H1 (cell line): ENCODE measurements at regions of chr22 and their contacts with region 1.

Region 1: GRCh38 chr22:43113526-43114251 is 3.1 kb downstream of the BIK start:
- DNase-seq: no peak
- H3K4me3 ChIP-seq: no peak overlapping the region
- H3K27ac ChIP-seq: no peak overlapping the region
- H3K4me1 ChIP-seq: peaks cover 0 to 10% (median 5%) of the 10 kb centered on the region in 4 experiments
- H3K27me3 ChIP-seq: peaks cover 10 to 44% (median 39%) of the 10 kb centered on the region in 4 experiments
- CTCF ChIP-seq: no peak
- EP300 ChIP-seq: no peak
- POLR2A ChIP-seq: no peak
- RAD21 ChIP-seq: no peak

Region 2: GRCh38 chr22:42895541-42895981 is 218.1 kb before region 1 on chr22:
- CTCF ChIA-PET with region 1: no interaction called
- POLR2A ChIA-PET with region 1: no interaction called
- DNase-seq: no peak
- H3K4me3 ChIP-seq: no peak overlapping the region
- H3K27ac ChIP-seq: 0 out of 2 replicates have a peak overlapping the region, but pooled peaks have one; percentile 0
- H3K4me1 ChIP-seq: no peaks in the 10 kb centered on the region; a peak in 1 of 7 replicates
- H3K27me3 ChIP-seq: no peaks in the 10 kb centered on the region
- CTCF ChIP-seq: no peak
- EP300 ChIP-seq: no peak
- POLR2A ChIP-seq: no peak
- RAD21 ChIP-seq: no peak

Region 3: GRCh38 chr22:43088979-43089717 is 24.5 kb before region 1 on chr22 and contains the start of gene TTLL1:
- CTCF ChIA-PET with region 1: no interaction called
- POLR2A ChIA-PET with region 1: no interaction called
- DNase-seq: peak; percentile 75 to 95
- H3K4me3 ChIP-seq: peak within 1 kb of the TSS; percentile 59 to 82 (median 65)
- H3K27ac ChIP-seq: no peak within 1 kb of the TSS; the same call in 1 of the 2 replicates
- H3K4me1 ChIP-seq: no peaks in the 10 kb centered on the region
- H3K27me3 ChIP-seq: no peaks in the 10 kb centered on the region
- CTCF ChIP-seq: no peak
- EP300 ChIP-seq: peak in 1 of 2 experiments; percentile 41; a peak in 1 of 3 replicates
- POLR2A ChIP-seq: peak in 1 of 2 experiments; percentile 62; a peak in 2 of 3 replicates
- RAD21 ChIP-seq: no peak; a peak in 1 of 4 replicates
- total RNA-seq, gene TTLL1: 4.1 and 5.0 TPM in 2 replicates

Region 4: DNA sequence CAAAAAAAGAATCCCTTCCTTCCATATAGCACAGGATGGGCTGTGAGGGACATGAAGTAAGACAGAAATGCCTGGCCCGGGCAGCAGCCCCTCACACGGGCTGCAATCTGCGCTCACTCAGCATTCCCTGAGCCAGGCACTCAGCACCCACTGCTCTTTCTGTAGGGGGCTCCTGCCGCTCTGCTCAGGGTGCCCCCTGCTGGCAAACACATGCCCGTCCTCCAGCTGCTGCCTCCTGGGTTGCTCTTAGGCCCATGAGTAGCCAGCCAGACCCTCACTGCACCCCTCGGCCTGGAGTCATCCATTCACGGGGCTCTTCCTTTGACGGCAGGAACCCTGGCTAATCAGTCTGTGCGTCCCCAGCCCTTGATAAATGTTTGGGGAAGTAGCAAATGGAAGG is 22.6 kb after region 1 on chr22:
- CTCF ChIA-PET with region 1: interaction called, 10 read pairs
- POLR2A ChIA-PET with region 1: interaction called, 4 read pairs
- DNase-seq: peak in 1 of 2 experiments; percentile 56
- H3K4me3 ChIP-seq: no peak overlapping the region
- H3K27ac ChIP-seq: no peak overlapping the region
- H3K4me1 ChIP-seq: no peaks in the 10 kb centered on the region
- H3K27me3 ChIP-seq: no peaks in the 10 kb centered on the region
- CTCF ChIP-seq: peak; percentile 65 to 73 (median 72)
- EP300 ChIP-seq: no peak
- POLR2A ChIP-seq: no peak
- RAD21 ChIP-seq: peak; percentile 48 to 64